ENCODE measurements at regions of chr7 and their contacts with region 1.

Region 1: GRCh38 chr7:27143023-27143949 is at the start of gene HOXA5:
- DNase-seq: no peak
- H3K4me3 ChIP-seq: peak within 1 kb of the TSS in 17 of 59 donors; percentile 11 to 39 (median 28)
- H3K27ac ChIP-seq: no peak within 1 kb of the TSS
- H3K27me3 ChIP-seq: peaks cover 20 to 100% (median 100%) of the 10 kb centered on the region in 45 donors
- CTCF ChIP-seq: peak in 10 of 56 donors; percentile 7 to 43 (median 28)
- total RNA-seq, gene HOXA5: 0.35 to 1.8 TPM in 2 of 120 experiments, not detected in the others

Region 2: DNA sequence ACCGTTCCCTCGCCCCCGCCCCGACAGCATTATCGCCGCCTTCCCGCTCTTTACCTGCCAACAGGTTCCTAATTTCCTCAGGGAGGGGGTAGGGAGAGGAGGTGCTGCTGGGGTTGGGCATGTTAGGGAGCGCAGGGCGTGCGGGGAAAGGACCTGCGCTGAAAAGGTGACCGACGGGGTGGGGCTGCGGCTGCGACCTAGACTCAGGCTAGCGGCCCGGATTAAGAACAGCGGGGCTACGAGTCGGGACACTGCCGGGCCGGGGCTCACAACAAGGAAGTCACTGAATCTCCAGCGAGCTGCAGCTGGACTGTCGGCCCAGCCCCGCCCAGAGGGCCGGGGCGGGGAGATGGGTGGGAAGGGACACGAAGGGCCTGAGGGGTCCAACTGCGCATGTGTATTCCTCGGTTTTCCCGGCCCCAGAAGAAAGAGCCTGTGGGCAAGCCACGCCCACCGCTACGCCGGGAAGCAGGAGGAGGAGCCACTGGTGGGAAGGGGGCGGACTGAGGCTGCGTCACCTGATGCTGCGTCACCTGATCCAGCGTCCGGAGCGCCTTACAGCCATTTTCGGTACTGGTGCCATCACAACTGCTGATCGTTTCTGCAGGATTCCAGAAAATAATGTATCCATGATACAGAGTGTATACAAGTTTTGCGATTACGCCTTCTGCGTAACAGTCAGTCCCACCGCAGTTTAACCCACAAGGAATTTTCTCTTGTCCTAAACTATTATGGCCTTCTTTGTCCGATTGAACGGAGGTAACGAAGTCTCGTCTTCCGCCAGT is 278.8 kb before region 1 on chr7 and contains the start of gene SKAP2:
- intact Hi-C with region 1: loop called in 1 of 2 experiments (anchors 5 kb)
- DNase-seq: peak; percentile 92 to 98 (median 96)
- H3K4me3 ChIP-seq: peak within 1 kb of the TSS; percentile 44 to 88 (median 72)
- H3K27ac ChIP-seq: peak within 1 kb of the TSS; percentile 6 to 94 (median 82)
- H3K27me3 ChIP-seq: peaks cover 0 to 32% (median 4%) of the 10 kb centered on the region in 45 donors
- CTCF ChIP-seq: peak in 6 of 56 donors; percentile 3 to 45 (median 7)
- total RNA-seq, gene SKAP2: 13.3 to 44.8 (median 28.6) TPM

Region 3: DNA sequence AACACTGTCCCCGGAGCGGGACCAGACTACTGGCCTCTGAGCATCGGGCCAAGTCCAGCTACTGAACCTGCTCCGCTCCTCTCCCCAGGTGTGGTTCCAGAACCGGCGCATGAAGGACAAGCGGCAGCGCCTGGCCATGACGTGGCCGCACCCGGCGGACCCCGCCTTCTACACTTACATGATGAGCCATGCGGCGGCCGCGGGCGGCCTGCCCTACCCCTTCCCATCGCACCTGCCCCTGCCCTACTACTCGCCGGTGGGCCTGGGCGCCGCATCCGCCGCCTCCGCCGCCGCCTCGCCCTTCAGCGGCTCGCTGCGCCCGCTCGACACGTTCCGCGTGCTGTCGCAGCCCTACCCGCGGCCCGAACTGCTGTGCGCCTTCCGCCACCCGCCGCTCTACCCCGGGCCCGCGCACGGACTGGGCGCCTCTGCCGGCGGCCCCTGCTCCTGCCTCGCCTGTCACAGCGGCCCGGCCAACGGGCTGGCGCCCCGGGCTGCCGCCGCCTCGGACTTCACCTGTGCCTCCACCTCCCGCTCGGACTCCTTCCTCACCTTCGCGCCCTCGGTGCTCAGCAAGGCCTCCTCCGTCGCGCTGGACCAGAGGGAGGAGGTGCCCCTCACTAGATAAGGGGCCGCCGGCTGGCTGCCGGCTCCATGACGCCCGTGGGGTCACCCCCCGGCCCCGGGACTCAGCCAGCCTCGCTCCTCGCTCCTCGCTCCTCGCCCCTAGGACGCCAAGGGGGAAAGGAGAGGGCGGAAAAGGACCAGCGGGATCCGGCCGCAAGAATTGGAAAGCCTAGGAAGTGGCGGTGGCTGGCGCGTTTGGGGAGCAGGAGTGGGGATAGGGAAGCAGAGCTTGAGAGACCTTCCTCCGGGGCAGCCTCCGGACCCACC is 102.8 kb after region 1 on chr7:
- intact Hi-C with region 1: no loop called
- DNase-seq: no peak
- H3K4me3 ChIP-seq: peak overlapping the region in 20 of 59 donors; percentile 7 to 48 (median 27)
- H3K27ac ChIP-seq: no peak overlapping the region
- H3K27me3 ChIP-seq: peaks cover 25 to 100% (median 100%) of the 10 kb centered on the region in 45 donors
- CTCF ChIP-seq: no peak